ENCODE measurements at regions of chrX and their contacts with region 1.

Region 1: GRCh38 chrX:136168929-136169735 is 21.8 kb downstream of the FHL1 start:
- DNase-seq: peak; percentile 42
- ATAC-seq: peak; percentile 70 to 92

Region 2: DNA sequence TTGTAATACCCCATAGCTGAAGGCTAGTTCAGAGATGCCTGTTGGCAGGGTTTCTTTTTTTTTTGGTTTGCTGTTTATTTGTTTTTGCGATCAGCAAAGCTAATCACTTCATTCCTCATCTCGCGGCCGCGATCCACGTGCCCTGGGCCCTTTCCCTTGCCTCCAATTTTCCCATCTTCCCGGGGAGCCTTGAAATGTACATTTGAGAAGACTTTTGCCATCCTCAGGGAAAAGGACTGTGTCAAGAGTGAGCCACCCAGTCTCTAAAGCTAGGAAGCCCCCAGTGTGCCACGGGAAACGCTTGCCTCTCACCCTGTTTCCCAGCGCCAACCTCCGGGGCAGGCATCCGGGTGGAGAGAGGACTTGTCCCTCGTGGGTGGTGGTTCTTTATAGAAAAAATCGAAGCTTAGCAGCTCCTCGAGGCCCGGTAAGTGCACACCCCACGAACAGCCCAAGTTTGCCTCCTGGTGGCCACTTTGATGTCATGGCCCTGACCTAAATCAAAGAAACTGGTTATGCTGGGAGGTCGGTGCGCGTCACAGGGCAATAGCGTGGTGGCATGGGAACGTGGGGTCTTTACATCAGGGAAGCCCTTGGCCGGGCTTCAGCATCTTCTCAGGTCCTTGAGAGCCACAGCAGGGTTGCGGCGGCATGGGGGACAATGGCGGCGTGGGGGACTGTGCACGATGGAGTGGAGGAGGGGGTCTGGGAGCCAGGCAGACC is 40.0 kb after region 1 on chrX:
- intact Hi-C with region 1: loop called in 1 of 2 experiments (anchors 1 kb)
- DNase-seq: peak; percentile 69
- ATAC-seq: peak; percentile 16 to 57

Region 3: DNA sequence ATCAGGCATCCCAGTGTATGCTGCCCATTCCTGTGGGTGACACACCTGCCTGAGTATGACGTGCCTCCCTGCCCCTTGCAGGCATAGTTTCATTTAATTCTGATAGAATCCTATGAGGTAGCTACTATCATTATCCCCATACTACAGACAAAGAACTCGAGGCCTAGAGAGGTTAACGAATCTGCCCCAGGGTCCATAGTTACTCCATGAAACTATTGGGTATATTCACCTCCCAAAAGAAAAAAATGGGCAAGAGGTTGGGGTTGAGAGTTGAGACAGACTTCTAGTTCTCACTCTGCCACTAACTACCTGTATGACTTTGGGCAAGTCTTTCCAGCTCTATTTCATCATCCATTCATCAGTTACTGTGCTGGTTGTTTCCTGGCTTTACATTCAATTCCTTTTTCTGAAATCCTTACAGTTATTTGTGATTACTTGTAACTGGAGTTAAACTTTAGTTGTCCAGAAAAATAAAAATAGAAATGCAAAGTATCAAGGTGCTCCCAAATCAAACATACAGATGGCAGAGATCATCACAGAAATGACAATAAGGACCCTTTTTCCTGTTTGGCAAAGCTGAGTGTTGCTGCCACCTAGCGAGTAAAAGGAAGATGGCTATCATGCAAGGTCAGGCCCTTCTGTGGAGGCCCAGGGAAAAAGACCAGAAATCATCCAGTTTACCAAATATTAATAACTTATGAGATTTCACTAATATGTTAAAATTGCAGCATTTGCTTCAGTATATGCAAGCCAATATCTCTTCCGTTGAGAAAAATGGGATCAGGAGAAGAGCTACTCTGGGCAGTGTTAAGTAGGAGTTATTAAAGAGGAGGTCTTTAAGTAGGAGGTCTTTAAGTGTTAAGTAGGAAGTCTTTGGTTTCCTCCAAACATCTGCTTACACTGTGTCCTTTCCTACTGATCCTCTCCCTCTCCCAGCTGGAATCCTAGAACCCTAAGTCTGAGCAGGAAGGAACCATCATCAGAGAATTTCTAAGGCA is 99.2 kb after region 1 on chrX:
- intact Hi-C with region 1: loop called in 1 of 2 experiments (anchors 5 kb)
- DNase-seq: no peak
- ATAC-seq: no peak

Region 4: GRCh38 chrX:137040976-137041728 is 872.0 kb after region 1 on chrX:
- intact Hi-C with region 1: no loop called
- DNase-seq: no peak
- ATAC-seq: no peak